ENCODE measurements at regions of chr15 and their contacts with region 1.

Region 1: GRCh38 chr15:57732526-57733331 is 26.2 kb downstream of the POLR2M start:
- DNase-seq: peak in 13 of 14 experiments; percentile 9 to 71 (median 33)
- ATAC-seq: no peak
- H3K4me3 ChIP-seq: no peak overlapping the region
- H3K4me3 Mint-ChIP-seq: no peak overlapping the region
- H3K27ac ChIP-seq: no peak overlapping the region
- H3K27ac Mint-ChIP-seq: no peak overlapping the region
- H3K4me1 ChIP-seq: no peaks in the 10 kb centered on the region
- H3K4me1 Mint-ChIP-seq: peaks cover 13% of the 10 kb centered on the region
- H3K27me3 ChIP-seq: no peaks in the 10 kb centered on the region
- H3K27me3 Mint-ChIP-seq: no peaks in the 10 kb centered on the region
- CTCF ChIP-seq: peak; percentile 94

Region 2: GRCh38 chr15:57580866-57581265 is 151.9 kb before region 1 on chr15:
- CTCF ChIA-PET with region 1: no interaction called
- POLR2A ChIA-PET with region 1: no interaction called
- intact Hi-C with region 1: no loop called
- DNase-seq: no peak
- ATAC-seq: no peak
- H3K4me3 ChIP-seq: no peak overlapping the region
- H3K4me3 Mint-ChIP-seq: no peak overlapping the region
- H3K27ac ChIP-seq: no peak overlapping the region
- H3K27ac Mint-ChIP-seq: no peak overlapping the region
- H3K4me1 ChIP-seq: no peaks in the 10 kb centered on the region
- H3K4me1 Mint-ChIP-seq: peaks cover 4% of the 10 kb centered on the region
- H3K27me3 ChIP-seq: peaks cover 0 to 7% of the 10 kb centered on the region in 2 experiments
- H3K27me3 Mint-ChIP-seq: peaks cover 28% of the 10 kb centered on the region
- CTCF ChIP-seq: no peak

Region 3: DNA sequence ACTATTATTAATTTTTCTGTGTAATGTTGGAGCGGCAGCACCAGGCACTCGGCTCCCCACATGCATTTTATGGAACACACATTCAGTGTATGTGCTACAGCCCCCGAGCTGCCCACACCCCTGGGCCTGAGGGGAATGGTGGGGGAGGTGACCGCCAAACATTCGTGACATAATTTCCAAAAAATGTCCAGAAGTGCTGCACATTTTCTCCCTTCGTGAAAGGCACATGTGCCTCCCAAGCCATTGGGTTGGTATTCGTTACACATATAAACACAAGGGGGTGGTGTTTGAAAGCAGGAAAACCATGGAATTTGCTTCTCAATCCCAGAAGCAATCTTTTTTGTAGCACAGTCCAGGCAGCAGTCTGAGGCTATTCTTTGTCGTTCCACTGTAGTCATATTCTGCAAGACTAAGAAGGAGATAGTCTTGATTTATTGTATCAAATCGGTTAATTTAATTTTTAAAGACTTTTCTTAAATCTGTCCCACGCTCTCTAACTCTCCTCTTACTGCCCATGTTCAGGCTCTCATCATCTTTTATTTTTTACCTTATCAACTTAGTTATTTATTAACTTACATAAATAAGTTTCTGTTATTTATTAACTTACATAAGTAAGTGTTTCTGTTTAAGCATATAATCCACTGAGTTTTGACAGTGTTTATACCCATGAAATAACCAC is 65.4 kb before region 1 on chr15:
- CTCF ChIA-PET with region 1: no interaction called
- POLR2A ChIA-PET with region 1: interaction called, 3 read pairs
- intact Hi-C with region 1: loop called in 1 of 2 experiments (anchors 5 kb)
- DNase-seq: peak in 1 of 14 experiments; percentile 14
- ATAC-seq: no peak
- H3K4me3 ChIP-seq: no peak overlapping the region
- H3K4me3 Mint-ChIP-seq: no peak overlapping the region
- H3K27ac ChIP-seq: no peak overlapping the region
- H3K27ac Mint-ChIP-seq: no peak overlapping the region
- H3K4me1 ChIP-seq: no peaks in the 10 kb centered on the region
- H3K4me1 Mint-ChIP-seq: no peaks in the 10 kb centered on the region
- H3K27me3 ChIP-seq: peaks cover 0 to under 1% of the 10 kb centered on the region in 2 experiments
- H3K27me3 Mint-ChIP-seq: peaks cover 4% of the 10 kb centered on the region
- CTCF ChIP-seq: no peak

Region 4: DNA sequence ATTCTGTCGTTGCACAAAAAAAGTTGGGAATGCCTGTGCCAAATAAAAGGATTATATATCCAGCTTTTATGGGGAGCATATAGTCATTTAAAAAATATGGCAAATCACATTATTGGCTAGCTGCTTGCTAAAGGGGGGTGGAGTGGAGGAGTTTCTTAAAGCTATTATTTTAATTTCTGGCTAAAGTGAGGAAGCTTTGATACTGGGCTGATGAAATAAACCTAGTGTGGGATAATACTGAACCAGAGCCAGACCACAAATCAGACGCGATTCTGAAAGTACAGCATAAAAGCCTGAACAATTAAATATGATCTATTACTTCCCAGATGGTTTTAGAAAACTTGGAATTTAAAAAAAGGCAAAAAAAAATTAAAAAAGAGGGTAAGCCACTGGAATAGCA is 11.9 kb before region 1 on chr15:
- CTCF ChIA-PET with region 1: interaction called, 14 read pairs
- POLR2A ChIA-PET with region 1: no interaction called
- intact Hi-C with region 1: no loop called
- DNase-seq: no peak
- ATAC-seq: no peak
- H3K4me3 ChIP-seq: no peak overlapping the region
- H3K4me3 Mint-ChIP-seq: no peak overlapping the region
- H3K27ac ChIP-seq: no peak overlapping the region
- H3K27ac Mint-ChIP-seq: no peak overlapping the region
- H3K4me1 ChIP-seq: no peaks in the 10 kb centered on the region
- H3K4me1 Mint-ChIP-seq: peaks cover 1% of the 10 kb centered on the region
- H3K27me3 ChIP-seq: no peaks in the 10 kb centered on the region
- H3K27me3 Mint-ChIP-seq: no peaks in the 10 kb centered on the region
- CTCF ChIP-seq: no peak

Measured in CD4-positive, alpha-beta T cell (primary cell).